Upper lobe of right lung (tissue), 1 donor: ENCODE measurements at regions of chr22 and their contacts with region 1.

Region 1: GRCh38 chr22:40346178-40347118 is at the start of gene ADSL:
- DNase-seq: peak; percentile 95
- ATAC-seq: peak; percentile 99
- H3K4me3 ChIP-seq: peak within 1 kb of the TSS; percentile 89
- H3K27ac ChIP-seq: peak within 1 kb of the TSS; percentile 85
- H3K4me1 ChIP-seq: peaks cover 22% of the 10 kb centered on the region
- H3K27me3 ChIP-seq: no peaks in the 10 kb centered on the region
- CTCF ChIP-seq: no peak
- total RNA-seq, gene ADSL: 38.7 TPM

Region 2: GRCh38 chr22:40044102-40044869 is 302.2 kb before region 1 on chr22:
- intact Hi-C with region 1: loop called (anchors 10 kb)
- DNase-seq: peak; percentile 97
- ATAC-seq: peak; percentile 96
- H3K4me3 ChIP-seq: peak overlapping the region; percentile 67
- H3K27ac ChIP-seq: peak overlapping the region; percentile 89
- H3K4me1 ChIP-seq: peaks cover 27% of the 10 kb centered on the region
- H3K27me3 ChIP-seq: peaks cover under 1% of the 10 kb centered on the region
- CTCF ChIP-seq: no peak

Region 3: GRCh38 chr22:40238425-40239344 is 107.8 kb before region 1 on chr22:
- intact Hi-C with region 1: no loop called
- DNase-seq: no peak
- ATAC-seq: peak; percentile 58
- H3K4me3 ChIP-seq: no peak overlapping the region
- H3K27ac ChIP-seq: peak overlapping the region; percentile 45
- H3K4me1 ChIP-seq: peaks cover 22% of the 10 kb centered on the region
- H3K27me3 ChIP-seq: no peaks in the 10 kb centered on the region
- CTCF ChIP-seq: no peak